Tibial artery (tissue), 4 donors: ENCODE measurements at regions of chr5 and their contacts with region 1.

Region 1: GRCh38 chr5:22549876-22550671 is 303.1 kb downstream of the CDH12 start:
- DNase-seq: no peak
- H3K4me3 ChIP-seq: no peak overlapping the region
- H3K27ac ChIP-seq: no peak overlapping the region
- H3K4me1 ChIP-seq: no peaks in the 10 kb centered on the region
- H3K27me3 ChIP-seq: no peaks in the 10 kb centered on the region
- CTCF ChIP-seq: no peak

Region 2: GRCh38 chr5:22521521-22521920 is 28.6 kb before region 1 on chr5:
- intact Hi-C with region 1: loop called (anchors 1 kb)
- DNase-seq: no peak
- H3K4me3 ChIP-seq: no peak overlapping the region
- H3K27ac ChIP-seq: no peak overlapping the region
- H3K4me1 ChIP-seq: no peaks in the 10 kb centered on the region
- H3K27me3 ChIP-seq: no peaks in the 10 kb centered on the region
- CTCF ChIP-seq: no peak